ENCODE measurements at regions of chr1 and their contacts with region 1.

Region 1: GRCh38 chr1:206583707-206584648 is 28.3 kb downstream of the EIF2D start:
- DNase-seq: peak; percentile 36 to 91
- H3K4me3 ChIP-seq: no peak overlapping the region
- H3K27ac ChIP-seq: no peak overlapping the region
- H3K4me1 ChIP-seq: no peaks in the 10 kb centered on the region
- H3K27me3 ChIP-seq: no peaks in the 10 kb centered on the region
- CTCF ChIP-seq: peak; percentile 86 to 88 (median 87)
- EP300 ChIP-seq: no peak
- POLR2A ChIP-seq: no peak
- RAD21 ChIP-seq: peak; percentile 89 to 91

Region 2: DNA sequence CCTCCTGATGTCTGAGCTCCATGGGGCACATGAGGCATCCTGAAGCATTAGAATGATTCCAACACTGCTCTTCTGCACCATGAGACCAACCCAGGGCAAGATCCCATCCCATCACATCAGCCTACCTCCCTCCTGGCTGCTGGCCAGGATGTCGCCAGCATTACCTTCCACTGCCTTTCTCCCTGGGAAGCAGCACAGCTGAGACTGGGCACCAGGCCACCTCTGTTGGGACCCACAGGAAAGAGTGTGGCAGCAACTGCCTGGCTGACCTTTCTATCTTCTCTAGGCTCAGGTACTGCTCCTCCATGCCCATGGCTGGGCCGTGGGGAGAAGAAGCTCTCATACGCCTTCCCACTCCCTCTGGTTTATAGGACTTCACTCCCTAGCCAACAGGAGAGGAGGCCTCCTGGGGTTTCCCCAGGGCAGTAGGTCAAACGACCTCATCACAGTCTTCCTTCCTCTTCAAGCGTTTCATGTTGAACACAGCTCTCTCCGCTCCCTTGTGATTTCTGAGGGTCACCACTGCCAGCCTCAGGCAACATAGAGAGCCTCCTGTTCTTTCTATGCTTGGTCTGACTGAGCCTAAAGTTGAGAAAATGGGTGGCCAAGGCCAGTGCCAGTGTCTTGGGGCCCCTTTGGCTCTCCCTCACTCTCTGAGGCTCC is 87.7 kb before region 1 on chr1:
- CTCF ChIA-PET with region 1: interaction called, 239 read pairs
- POLR2A ChIA-PET with region 1: interaction called, 3 read pairs
- DNase-seq: no peak
- H3K4me3 ChIP-seq: no peak overlapping the region
- H3K27ac ChIP-seq: no peak overlapping the region
- H3K4me1 ChIP-seq: 0 out of 7 replicates have a peak, but pooled peaks cover 0 to 3% (median 0%) of the 10 kb centered on the region in 4 experiments
- H3K27me3 ChIP-seq: no peaks in the 10 kb centered on the region
- CTCF ChIP-seq: no peak
- EP300 ChIP-seq: no peak
- POLR2A ChIP-seq: no peak
- RAD21 ChIP-seq: no peak

Region 3: DNA sequence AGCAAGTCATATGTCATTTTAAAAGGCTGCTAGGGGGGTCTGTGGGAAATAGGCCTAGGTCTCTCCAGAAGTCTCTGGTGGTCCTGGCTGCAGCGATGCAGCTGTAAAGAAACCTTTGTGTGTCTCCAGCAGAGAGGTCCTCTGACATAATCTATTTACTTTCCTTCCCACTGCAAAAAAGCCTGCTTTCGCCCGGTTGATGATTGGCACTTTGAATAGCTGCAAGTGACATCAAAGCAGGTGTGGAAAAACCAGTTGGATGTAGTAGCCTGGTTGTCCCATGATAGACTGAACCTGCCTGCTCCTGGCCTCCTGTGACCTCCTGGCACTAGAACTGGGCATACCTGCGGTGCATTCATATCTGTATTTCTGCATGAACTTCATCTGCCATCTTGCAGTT is 62.8 kb before region 1 on chr1:
- CTCF ChIA-PET with region 1: interaction called, 13 read pairs
- POLR2A ChIA-PET with region 1: no interaction called
- DNase-seq: no peak
- H3K4me3 ChIP-seq: no peak overlapping the region
- H3K27ac ChIP-seq: no peak overlapping the region
- H3K4me1 ChIP-seq: no peaks in the 10 kb centered on the region
- H3K27me3 ChIP-seq: no peaks in the 10 kb centered on the region
- CTCF ChIP-seq: no peak
- EP300 ChIP-seq: no peak
- POLR2A ChIP-seq: no peak
- RAD21 ChIP-seq: no peak

Region 4: DNA sequence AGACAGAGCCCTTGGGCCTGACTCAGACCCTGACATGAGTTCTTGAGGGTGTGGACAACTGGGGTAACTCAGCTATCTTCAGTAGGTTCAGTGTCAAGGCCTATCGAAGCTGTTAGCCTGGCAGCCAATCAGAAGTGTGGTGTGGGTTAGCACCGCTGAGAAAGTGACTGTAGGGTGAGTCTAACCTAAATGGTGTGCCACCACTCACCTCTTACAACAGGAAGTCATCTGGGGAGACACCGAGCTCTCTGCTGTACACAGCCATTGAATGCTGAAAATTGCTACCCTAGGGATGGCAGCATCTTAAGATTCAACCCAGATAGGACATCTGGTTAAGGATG is 32.0 kb before region 1 on chr1:
- CTCF ChIA-PET with region 1: interaction called, 298 read pairs
- POLR2A ChIA-PET with region 1: interaction called, 3 read pairs
- DNase-seq: no peak
- H3K4me3 ChIP-seq: no peak overlapping the region
- H3K27ac ChIP-seq: no peak overlapping the region
- H3K4me1 ChIP-seq: peaks cover 0 to 7% (median 2%) of the 10 kb centered on the region in 4 experiments; a peak in 3 of 7 replicates
- H3K27me3 ChIP-seq: peaks cover 0 to 8% (median 5%) of the 10 kb centered on the region in 4 experiments; a peak in 4 of 7 replicates
- CTCF ChIP-seq: no peak
- EP300 ChIP-seq: no peak
- POLR2A ChIP-seq: no peak
- RAD21 ChIP-seq: no peak

Region 5: DNA sequence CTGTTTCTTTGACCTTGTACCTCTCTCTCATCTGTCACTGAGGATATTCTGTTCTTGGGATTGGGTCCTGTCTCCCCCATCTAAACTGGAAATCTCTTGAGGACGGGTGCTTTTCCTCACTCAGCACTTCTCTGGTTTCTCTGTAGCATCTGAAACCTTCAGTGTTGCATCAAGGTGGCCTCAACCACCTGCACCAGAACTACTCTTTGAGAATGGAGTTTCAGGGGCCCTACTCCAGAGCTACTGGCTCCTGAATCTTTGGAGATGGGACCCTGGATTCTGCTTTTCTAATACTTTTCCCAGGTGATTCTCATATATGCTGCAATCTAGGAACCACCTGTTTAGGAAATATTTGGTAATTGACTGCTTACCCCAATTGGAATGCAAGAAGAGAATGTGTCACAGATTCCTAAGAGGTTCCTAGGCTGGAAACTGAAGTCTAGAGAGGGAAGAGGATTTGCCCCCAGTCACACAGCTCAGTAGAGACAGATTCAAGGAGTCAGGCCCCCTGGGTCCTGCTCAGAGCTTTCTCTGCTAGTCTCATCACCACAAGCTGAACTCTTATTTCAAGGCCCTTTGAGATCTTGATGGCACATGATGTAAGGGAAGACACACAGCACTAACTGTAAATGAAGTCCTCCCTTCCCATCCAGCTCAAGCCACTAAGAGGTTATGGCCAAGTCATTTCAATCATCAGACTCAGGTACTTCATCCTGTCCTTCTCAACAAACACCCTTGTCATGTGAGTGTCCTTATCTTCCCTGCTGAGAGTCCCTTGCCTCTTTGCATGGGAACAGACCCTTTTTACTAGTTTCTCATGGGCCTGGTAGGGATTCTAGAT is 20.4 kb before region 1 on chr1:
- CTCF ChIA-PET with region 1: interaction called, 20 read pairs
- POLR2A ChIA-PET with region 1: interaction called, 4 read pairs
- DNase-seq: no peak
- H3K4me3 ChIP-seq: no peak overlapping the region
- H3K27ac ChIP-seq: no peak overlapping the region
- H3K4me1 ChIP-seq: peaks cover 0 to under 1% (median 0%) of the 10 kb centered on the region in 4 experiments; a peak in 4 of 7 replicates
- H3K27me3 ChIP-seq: peaks cover 0 to 6% (median 2%) of the 10 kb centered on the region in 4 experiments; a peak in 3 of 7 replicates
- CTCF ChIP-seq: no peak
- EP300 ChIP-seq: no peak
- POLR2A ChIP-seq: no peak
- RAD21 ChIP-seq: no peak

Region 6: GRCh38 chr1:206663832-206664652 is 80.1 kb after region 1 on chr1:
- CTCF ChIA-PET with region 1: interaction called, 15 read pairs
- POLR2A ChIA-PET with region 1: no interaction called
- DNase-seq: peak in 1 of 2 experiments; percentile 92
- H3K4me3 ChIP-seq: peak overlapping the region; percentile 11 to 54 (median 25); a peak in 7 of 8 replicates
- H3K27ac ChIP-seq: no peak overlapping the region
- H3K4me1 ChIP-seq: peaks cover 0 to 5% (median 1%) of the 10 kb centered on the region in 4 experiments; a peak in 4 of 7 replicates
- H3K27me3 ChIP-seq: peaks cover 0 to 10% (median 3%) of the 10 kb centered on the region in 4 experiments; a peak in 5 of 7 replicates
- CTCF ChIP-seq: peak; percentile 72 to 91 (median 87)
- EP300 ChIP-seq: no peak
- POLR2A ChIP-seq: no peak
- RAD21 ChIP-seq: peak; percentile 88 to 94